HepG2 (cell line): ENCODE measurements at regions of chr20 and their contacts with region 1.

Region 1: DNA sequence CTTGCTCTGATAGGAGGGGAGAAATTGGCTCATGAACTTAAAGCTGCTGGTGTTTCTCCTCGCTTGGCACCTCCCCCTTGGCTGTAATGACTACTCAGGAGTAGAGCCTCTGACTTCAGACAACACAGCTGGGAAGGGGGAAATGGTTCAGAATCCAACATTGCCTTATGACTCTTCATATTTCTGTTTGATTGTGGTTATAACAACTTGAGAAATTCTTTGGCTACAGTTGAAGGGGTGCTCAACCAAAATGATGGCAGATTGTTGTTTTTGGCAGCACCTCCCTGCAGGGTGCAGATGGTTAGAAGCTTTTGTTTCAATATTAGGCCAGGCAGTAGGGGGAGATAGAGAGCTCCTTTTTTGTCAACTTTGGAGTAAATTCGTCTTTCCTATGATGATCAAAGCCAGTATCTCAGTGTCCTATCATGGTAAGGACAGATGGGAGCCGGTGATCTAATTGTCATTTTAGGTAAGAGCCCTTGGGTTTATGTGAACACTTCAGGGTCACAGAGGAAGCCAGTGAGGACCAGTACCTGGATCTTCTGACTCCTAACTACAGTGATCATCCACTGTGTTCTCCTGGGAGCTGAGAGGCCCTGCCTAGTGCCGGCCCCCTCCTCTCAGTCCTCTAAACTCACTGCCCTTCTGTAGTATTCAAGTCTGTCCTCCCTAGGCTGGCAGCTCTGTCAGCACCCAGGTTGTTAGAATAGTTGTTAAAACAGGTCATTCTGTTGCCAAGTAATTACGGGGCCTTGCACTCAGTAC is 39.9 kb downstream of the RPRD1B start:
- DNase-seq: peak; percentile 76
- ATAC-seq: peak; percentile 82
- H3K4me3 ChIP-seq: no peak overlapping the region
- H3K27ac ChIP-seq: no peak overlapping the region
- H3K4me1 ChIP-seq: peaks cover 37% of the 10 kb centered on the region
- H3K27me3 ChIP-seq: no peaks in the 10 kb centered on the region
- CTCF ChIP-seq: peak; percentile 84
- EP300 ChIP-seq: no peak
- POLR2A ChIP-seq: no peak
- RAD21 ChIP-seq: peak; percentile 79

Region 2: GRCh38 chr20:38113401-38114325 is 40.2 kb after region 1 on chr20:
- CTCF ChIA-PET with region 1: interaction called, 4 read pairs
- POLR2A ChIA-PET with region 1: interaction called, 9 read pairs
- in situ Hi-C with region 1: no loop called
- intact Hi-C with region 1: loop called (anchors 2 kb)
- DNase-seq: peak; percentile 78
- ATAC-seq: peak; percentile 73
- H3K4me3 ChIP-seq: no peak overlapping the region
- H3K27ac ChIP-seq: no peak overlapping the region
- H3K4me1 ChIP-seq: peaks cover 51% of the 10 kb centered on the region
- H3K27me3 ChIP-seq: no peaks in the 10 kb centered on the region
- CTCF ChIP-seq: peak; percentile 81
- EP300 ChIP-seq: no peak
- POLR2A ChIP-seq: no peak
- RAD21 ChIP-seq: peak; percentile 78

Region 3: GRCh38 chr20:38406476-38406875 is 333.0 kb after region 1 on chr20:
- CTCF ChIA-PET with region 1: no interaction called
- POLR2A ChIA-PET with region 1: no interaction called
- in situ Hi-C with region 1: loop called (anchors 25 kb)
- intact Hi-C with region 1: loop called (anchors 5 kb)
- DNase-seq: no peak
- ATAC-seq: peak; percentile 10; the same call in 1 of the 3 replicates
- H3K4me3 ChIP-seq: no peak overlapping the region
- H3K27ac ChIP-seq: no peak overlapping the region
- H3K4me1 ChIP-seq: peaks cover 14% of the 10 kb centered on the region
- H3K27me3 ChIP-seq: no peaks in the 10 kb centered on the region
- CTCF ChIP-seq: no peak
- EP300 ChIP-seq: no peak
- POLR2A ChIP-seq: no peak
- RAD21 ChIP-seq: no peak